ENCODE measurements at regions of chr17 and their contacts with region 1.

Region 1: GRCh38 chr17:48961516-48962233 is 6.7 kb downstream of the GIP start:
- DNase-seq: no peak
- H3K4me3 ChIP-seq: no peak overlapping the region
- H3K27me3 ChIP-seq: no peaks in the 10 kb centered on the region
- CTCF ChIP-seq: no peak

Region 2: DNA sequence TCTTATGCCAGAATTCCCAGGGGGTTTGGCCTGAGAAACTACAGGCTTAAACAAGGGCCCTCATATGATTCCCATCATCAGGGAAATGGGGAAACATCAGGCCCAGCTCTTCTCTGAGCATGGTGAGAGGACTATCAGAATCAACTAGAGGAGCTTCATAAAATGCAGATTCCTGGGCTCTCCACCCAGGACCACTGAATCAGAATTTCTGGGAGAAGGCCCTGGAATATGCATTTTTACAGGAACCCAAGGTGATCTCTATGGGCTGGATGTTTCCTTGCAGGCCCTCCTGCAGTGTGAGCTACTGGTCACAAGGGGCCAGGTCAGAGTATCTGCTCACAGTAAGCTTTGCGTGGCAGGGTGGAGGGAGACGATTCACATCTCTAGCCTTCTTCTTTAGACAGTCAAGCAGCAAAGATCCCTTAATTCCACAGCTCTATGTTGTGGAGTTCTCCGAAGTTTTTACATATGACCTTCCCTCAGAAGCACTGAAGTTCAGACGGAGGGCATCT is 194.4 kb before region 1 on chr17:
- CTCF ChIA-PET with region 1: no interaction called
- POLR2A ChIA-PET with region 1: no interaction called
- DNase-seq: no peak
- H3K4me3 ChIP-seq: no peak overlapping the region
- H3K27me3 ChIP-seq: peaks cover 10% of the 10 kb centered on the region
- CTCF ChIP-seq: no peak

Region 3: DNA sequence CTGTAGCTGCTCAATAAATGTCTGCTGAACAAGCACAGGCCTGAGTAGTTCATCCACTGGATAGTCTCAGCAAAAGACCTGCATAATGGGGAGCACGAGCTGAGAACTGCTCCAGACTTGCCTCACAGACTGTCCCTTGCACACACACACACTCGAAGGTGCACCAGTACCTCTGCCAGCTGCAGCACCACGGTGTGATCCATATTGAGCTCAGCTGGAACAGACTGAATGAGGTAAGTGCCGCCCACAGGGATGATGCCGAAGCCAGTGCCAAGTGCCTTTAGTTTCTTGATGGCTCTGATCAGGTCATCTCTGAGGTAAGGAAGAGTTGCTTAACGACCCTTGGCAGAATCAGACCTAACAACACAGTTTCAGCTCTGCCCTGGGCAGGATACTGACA is 28.6 kb before region 1 on chr17:
- CTCF ChIA-PET with region 1: no interaction called
- POLR2A ChIA-PET with region 1: no interaction called
- DNase-seq: no peak
- H3K4me3 ChIP-seq: no peak overlapping the region
- H3K27me3 ChIP-seq: no peaks in the 10 kb centered on the region
- CTCF ChIP-seq: no peak

Region 4: GRCh38 chr17:48944519-48945260 is 17.0 kb before region 1 on chr17 and contains the start of gene SNF8:
- CTCF ChIA-PET with region 1: interaction called, 3 read pairs
- POLR2A ChIA-PET with region 1: interaction called, 16 read pairs
- DNase-seq: peak; percentile 39
- H3K4me3 ChIP-seq: peak within 1 kb of the TSS; percentile 62
- H3K27me3 ChIP-seq: no peaks in the 10 kb centered on the region
- CTCF ChIP-seq: no peak
- polyA plus RNA-seq, gene SNF8: 104 and 113 TPM in 2 replicates

Region 5: GRCh38 chr17:49136335-49136734 is 174.7 kb after region 1 on chr17:
- CTCF ChIA-PET with region 1: no interaction called
- POLR2A ChIA-PET with region 1: no interaction called
- DNase-seq: no peak
- H3K4me3 ChIP-seq: no peak overlapping the region
- H3K27me3 ChIP-seq: peaks cover 4% of the 10 kb centered on the region; the same call in 1 of the 2 replicates
- CTCF ChIP-seq: no peak

Measured in BJ (cell line).